ENCODE measurements at regions of chr7 and their contacts with region 1.

Region 1: DNA sequence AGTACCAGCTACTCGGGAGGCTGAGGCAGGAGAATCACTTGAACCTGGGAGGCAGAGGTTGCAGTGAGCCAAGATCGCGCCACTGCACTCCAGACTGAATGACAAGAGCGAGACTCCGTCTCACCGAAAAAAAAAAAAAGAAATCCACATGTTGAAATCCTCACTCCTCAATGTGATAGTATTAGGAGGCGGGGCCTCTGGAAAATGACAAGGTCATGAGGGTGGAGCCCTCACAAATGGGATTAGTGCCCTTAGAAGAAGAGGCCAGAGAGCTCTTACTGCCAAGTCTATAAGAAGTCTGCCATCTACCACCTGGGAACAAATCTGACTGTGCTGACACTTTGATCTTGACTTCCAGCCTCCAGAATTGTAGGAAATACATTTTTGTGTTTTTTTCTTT is 10.6 kb downstream of the MMD2 start:
- DNase-seq: no peak
- H3K4me3 ChIP-seq: no peak overlapping the region
- H3K27ac ChIP-seq: no peak overlapping the region
- H3K4me1 ChIP-seq: no peaks in the 10 kb centered on the region
- H3K27me3 ChIP-seq: peaks cover 0 to 77% (median 0%) of the 10 kb centered on the region in 7 donors
- CTCF ChIP-seq: no peak
- POLR2A ChIP-seq: no peak

Region 2: GRCh38 chr7:5005066-5005465 is 56.7 kb after region 1 on chr7:
- intact Hi-C with region 1: loop called (anchors 2 kb)
- DNase-seq: no peak
- H3K4me3 ChIP-seq: no peak overlapping the region
- H3K27ac ChIP-seq: no peak overlapping the region
- H3K4me1 ChIP-seq: no peaks in the 10 kb centered on the region
- H3K27me3 ChIP-seq: no peaks in the 10 kb centered on the region
- CTCF ChIP-seq: no peak
- POLR2A ChIP-seq: no peak